IMR-90 (cell line): ENCODE measurements at regions of chr10 and their contacts with region 1.

Region 1: GRCh38 chr10:112471878-112472487 is 25.0 kb downstream of the VTI1A start:
- DNase-seq: peak; percentile 68
- ATAC-seq: peak; percentile 76
- H3K4me3 ChIP-seq: no peak overlapping the region
- H3K27ac ChIP-seq: no peak overlapping the region
- H3K4me1 ChIP-seq: no peaks in the 10 kb centered on the region
- H3K27me3 ChIP-seq: no peaks in the 10 kb centered on the region
- CTCF ChIP-seq: peak; percentile 69
- POLR2A ChIP-seq: no peak
- RAD21 ChIP-seq: peak; percentile 77

Region 2: DNA sequence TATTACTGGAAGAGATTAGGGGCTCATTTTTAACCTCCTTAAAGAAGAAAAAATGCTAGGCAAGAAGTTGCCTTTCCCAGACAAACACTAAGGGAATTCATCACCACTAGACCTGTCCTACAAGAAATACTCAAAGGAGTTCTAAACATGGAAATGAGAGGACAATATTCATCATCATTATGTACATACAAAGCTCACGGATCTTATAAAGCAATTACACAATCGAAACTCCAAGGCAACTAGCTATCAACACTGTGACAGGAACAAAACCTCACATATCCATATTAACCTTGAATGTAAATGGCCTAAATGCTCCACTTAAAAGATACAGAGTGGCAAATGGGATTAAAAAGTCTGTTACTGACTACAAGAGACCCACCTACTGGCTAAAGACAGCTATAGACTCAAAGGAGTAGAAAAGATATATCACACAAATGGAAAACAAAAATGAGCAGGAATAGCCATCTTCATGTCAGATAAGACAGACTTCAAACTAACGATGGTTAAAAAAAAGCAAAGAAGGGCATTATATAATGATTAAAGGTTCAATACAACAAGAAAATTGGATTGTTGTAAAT is 1148.5 kb before region 1 on chr10:
- CTCF ChIA-PET with region 1: no interaction called
- POLR2A ChIA-PET with region 1: no interaction called
- dilution Hi-C with region 1: no loop called
- in situ Hi-C with region 1: no loop called
- intact Hi-C with region 1: no loop called
- DNase-seq: no peak
- ATAC-seq: no peak
- H3K4me3 ChIP-seq: no peak overlapping the region
- H3K27ac ChIP-seq: no peak overlapping the region
- H3K4me1 ChIP-seq: no peaks in the 10 kb centered on the region
- H3K27me3 ChIP-seq: no peaks in the 10 kb centered on the region
- CTCF ChIP-seq: no peak
- POLR2A ChIP-seq: no peak
- RAD21 ChIP-seq: no peak

Region 3: DNA sequence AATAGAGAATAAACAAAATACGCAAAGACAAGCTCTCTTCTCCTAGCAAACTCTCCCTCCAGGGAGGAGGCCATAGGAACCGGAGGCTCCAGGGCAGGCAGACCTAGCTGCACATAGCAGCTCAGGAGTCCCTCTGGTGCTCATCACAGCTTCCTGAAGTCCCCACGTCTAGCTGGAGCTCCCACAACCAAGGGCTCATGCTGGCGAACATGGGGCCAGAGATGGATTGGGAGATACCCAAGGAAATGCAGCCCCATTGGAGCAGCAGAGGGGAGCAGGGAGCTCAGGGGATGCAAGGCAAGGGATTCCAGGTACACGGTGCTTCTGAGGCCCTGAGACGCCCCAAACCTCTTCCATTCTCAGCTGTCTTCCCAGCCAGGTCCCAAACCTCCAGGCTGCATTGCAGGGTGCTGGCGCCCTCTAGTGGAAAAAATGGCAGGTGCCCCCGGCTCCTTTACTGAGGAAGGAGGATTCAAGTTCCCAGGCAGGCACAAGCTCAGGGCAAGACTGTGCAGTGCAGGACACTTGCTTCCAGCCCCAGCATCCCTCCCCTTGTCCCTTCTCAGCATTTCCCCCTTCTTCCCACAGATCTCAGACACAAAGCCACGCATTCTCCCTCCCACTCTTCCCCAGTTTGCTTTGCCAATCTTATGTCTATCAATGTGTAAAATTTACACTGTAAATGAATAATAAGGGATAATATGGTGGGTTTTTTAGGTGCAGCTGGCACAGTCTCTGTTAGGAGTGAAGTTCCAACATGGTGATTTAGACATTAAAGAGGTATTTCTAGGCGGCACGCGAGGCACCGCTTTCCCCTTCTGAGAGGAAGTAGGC is 334.6 kb before region 1 on chr10:
- CTCF ChIA-PET with region 1: no interaction called
- POLR2A ChIA-PET with region 1: no interaction called
- dilution Hi-C with region 1: no loop called
- in situ Hi-C with region 1: no loop called
- intact Hi-C with region 1: no loop called
- DNase-seq: peak; percentile 49
- ATAC-seq: peak; percentile 88
- H3K4me3 ChIP-seq: no peak overlapping the region
- H3K27ac ChIP-seq: no peak overlapping the region
- H3K4me1 ChIP-seq: no peaks in the 10 kb centered on the region
- H3K27me3 ChIP-seq: no peaks in the 10 kb centered on the region; the same call in 1 of the 2 replicates
- CTCF ChIP-seq: peak; percentile 88
- POLR2A ChIP-seq: no peak
- RAD21 ChIP-seq: peak; percentile 76

Region 4: GRCh38 chr10:112446855-112447711 is 24.9 kb before region 1 on chr10 and contains the starts of genes VTI1A and ZDHHC6:
- CTCF ChIA-PET with region 1: interaction called, 5 read pairs
- POLR2A ChIA-PET with region 1: no interaction called
- dilution Hi-C with region 1: no loop called
- in situ Hi-C with region 1: no loop called
- intact Hi-C with region 1: loop called (anchors 1 kb)
- DNase-seq: peak; percentile 84
- ATAC-seq: peak; percentile 96
- H3K4me3 ChIP-seq: peak within 1 kb of the TSS; percentile 95
- H3K27ac ChIP-seq: peak within 1 kb of the TSS; percentile 92
- H3K4me1 ChIP-seq: no peaks in the 10 kb centered on the region
- H3K27me3 ChIP-seq: no peaks in the 10 kb centered on the region
- CTCF ChIP-seq: peak; percentile 24; the same call in 1 of the 2 replicates
- POLR2A ChIP-seq: peak; percentile 67; the same call in 1 of the 2 replicates
- RAD21 ChIP-seq: 0 out of 2 replicates have a peak, but pooled peaks have one; percentile 10
- total RNA-seq, gene VTI1A: 24.9 and 35.0 TPM in 2 replicates
- total RNA-seq, gene ZDHHC6: 17.4 and 22.2 TPM in 2 replicates

Region 5: GRCh38 chr10:113454341-113455061 is 982.5 kb after region 1 on chr10:
- CTCF ChIA-PET with region 1: no interaction called
- POLR2A ChIA-PET with region 1: no interaction called
- dilution Hi-C with region 1: no loop called
- in situ Hi-C with region 1: no loop called
- intact Hi-C with region 1: loop called (anchors 10 kb)
- DNase-seq: peak; percentile 12
- ATAC-seq: peak; percentile 83
- H3K4me3 ChIP-seq: no peak overlapping the region
- H3K27ac ChIP-seq: no peak overlapping the region
- H3K4me1 ChIP-seq: no peaks in the 10 kb centered on the region
- H3K27me3 ChIP-seq: no peaks in the 10 kb centered on the region; the same call in none of the 2 replicates
- CTCF ChIP-seq: peak; percentile 52
- POLR2A ChIP-seq: no peak
- RAD21 ChIP-seq: peak; percentile 46

Region 6: GRCh38 chr10:113521123-113521795 is 1049.3 kb after region 1 on chr10:
- CTCF ChIA-PET with region 1: interaction called, 4 read pairs
- POLR2A ChIA-PET with region 1: no interaction called
- dilution Hi-C with region 1: no loop called
- in situ Hi-C with region 1: no loop called
- intact Hi-C with region 1: loop called (anchors 2 kb)
- DNase-seq: peak; percentile 70
- ATAC-seq: peak; percentile 96
- H3K4me3 ChIP-seq: no peak overlapping the region
- H3K27ac ChIP-seq: no peak overlapping the region
- H3K4me1 ChIP-seq: no peaks in the 10 kb centered on the region
- H3K27me3 ChIP-seq: 0 out of 2 replicates have a peak, but pooled peaks cover 2% of the 10 kb centered on the region
- CTCF ChIP-seq: peak; percentile 95
- POLR2A ChIP-seq: no peak
- RAD21 ChIP-seq: peak; percentile 89